HEK293T (cell line): ENCODE measurements at regions of chr6 and their contacts with region 1.

Region 1: DNA sequence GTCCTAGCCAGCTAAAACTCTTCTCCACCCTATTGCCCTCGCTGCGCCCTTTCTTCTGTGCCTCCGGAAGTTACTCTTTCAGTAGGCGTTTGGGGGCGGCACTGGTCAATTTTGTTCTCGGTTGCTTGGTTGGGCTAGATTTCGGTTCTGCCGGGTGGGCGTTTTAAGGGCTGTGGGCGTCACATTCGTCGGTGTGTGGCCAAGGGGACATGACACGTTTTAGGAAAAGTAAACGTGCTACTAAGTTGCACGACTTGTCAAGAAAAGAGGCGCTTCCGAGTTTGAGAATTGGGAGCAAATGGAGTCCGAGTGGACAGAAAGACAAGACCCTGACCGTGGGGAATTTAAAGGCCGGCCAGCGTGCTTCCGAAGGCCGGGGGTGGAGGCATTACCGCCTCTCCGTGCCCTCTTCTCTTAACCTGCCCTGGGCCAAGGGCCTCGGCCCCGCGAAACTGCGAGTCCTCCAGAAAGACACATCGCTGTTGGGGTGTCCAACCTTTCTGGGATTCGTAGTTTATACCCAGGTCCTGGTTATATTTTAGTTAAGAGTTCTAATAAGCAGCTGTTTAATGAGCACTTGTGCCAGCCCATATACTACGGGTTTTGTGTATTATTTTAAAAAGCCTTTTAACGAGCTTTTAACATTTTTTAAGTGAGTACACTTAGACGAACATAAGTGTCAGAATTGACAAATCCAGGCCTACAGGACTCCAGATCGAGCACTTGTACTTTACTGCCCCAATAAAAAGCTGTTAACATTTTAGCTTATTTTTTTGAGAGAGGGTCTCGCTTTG is 661 bp upstream of the BAG6 start:
- DNase-seq: peak; percentile 88

Region 2: DNA sequence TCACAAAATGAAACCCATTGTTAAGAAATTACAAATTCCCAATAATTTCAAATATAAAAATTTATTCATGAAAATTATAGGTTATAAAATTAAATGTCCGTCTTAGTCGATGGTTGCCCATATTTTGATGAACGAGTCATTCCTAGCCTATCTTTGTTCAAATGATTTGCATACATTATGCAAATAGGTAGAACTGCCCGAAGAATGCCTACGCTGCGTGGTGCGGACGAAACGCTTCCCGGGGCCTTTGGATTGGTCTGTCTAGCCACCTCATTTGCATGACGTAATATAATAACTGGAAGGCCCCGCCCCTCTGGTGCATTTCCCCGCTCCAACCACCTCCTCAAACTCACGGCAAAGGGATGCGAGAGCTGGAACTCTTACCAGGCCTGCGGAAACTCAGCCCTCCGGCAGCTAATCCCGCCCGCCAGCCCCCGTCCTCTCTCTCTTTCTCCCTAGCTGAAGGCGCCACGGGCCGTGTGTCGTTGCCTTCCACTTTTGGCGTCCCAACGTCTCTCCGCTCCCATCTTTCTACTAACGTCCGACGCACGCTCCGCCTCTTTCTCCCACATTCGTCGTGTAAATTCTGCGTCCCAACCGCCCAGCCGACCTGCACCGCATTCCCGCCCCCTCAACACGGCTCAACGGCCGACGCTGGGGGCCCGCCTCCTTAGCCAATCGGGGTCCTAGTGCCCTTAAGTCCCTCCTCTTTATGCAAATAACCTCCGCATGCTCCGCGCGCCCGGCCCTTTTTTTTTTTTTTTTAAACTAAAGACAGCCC is 33.1 kb before region 1 on chr6:
- CTCF ChIA-PET with region 1: no interaction called
- POLR2A ChIA-PET with region 1: interaction called, 24 read pairs
- DNase-seq: peak; percentile 98

Region 3: GRCh38 chr6:31634131-31634530 is 19.0 kb before region 1 on chr6:
- CTCF ChIA-PET with region 1: interaction called, 3 read pairs
- POLR2A ChIA-PET with region 1: interaction called, 19 read pairs
- DNase-seq: no peak

Region 4: DNA sequence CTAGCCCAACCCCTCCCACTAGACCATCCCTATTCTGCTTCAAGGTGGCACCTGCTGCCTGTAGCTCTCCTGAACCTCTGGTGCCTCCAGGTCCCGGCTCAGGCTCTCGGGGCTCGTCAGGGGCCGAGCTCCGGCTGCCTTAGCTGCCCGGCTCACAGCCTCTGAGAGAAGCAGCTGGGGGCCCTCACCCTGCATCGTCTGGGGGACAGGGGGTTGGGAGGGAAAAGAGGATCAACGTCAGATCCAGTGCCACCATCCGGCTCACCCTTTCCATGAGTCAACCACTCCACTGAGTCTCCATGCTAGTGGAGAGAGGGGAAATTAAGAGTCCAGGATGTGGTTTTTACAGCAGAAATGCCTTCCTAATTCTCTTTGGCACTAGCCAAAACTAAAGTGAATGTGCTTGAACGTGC is 13.7 kb before region 1 on chr6:
- CTCF ChIA-PET with region 1: interaction called, 3 read pairs
- POLR2A ChIA-PET with region 1: interaction called, 19 read pairs
- DNase-seq: no peak

Region 5: DNA sequence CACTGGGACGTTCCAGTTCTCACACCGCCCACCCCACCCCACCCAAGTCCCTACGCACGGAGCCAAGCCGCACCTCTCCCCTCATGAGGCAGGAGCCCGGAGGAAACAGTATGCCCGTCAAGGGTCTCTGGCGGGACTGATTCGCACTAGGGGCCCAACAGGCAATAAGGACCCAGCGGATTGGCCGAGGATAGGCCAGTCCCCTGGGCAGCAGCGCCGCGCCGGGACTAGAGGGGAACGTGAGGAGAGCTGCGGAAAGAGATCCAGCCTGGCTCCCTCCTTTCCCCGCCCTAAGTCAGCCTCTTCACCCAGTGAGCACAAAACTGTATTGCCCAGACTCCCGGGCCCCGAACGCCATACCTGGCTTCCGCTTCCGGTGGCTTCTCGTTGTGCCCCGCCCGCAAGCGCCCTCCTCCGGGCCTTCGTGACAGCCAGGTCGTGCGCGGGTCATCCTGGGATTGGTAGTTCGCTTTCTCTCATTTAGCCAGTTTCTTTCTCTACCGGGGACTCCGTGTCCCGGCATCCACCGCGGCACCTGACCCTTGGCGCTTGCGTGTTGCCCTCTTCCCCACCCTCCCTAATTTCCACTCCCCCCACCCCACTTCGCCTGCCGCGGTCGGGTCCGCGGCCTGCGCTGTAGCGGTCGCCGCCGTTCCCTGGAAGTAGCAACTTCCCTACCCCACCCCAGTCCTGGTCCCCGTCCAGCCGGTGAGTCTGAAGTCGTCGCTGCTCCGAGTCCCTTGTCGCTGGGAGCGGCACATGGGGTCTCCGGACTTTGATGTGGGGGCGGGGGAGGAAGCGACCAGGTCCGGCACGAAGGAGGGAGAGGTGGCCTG is 12.6 kb after region 1 on chr6 and contains the start of gene CSNK2B:
- CTCF ChIA-PET with region 1: interaction called, 4 read pairs
- POLR2A ChIA-PET with region 1: interaction called, 138 read pairs
- DNase-seq: peak; percentile 98

Region 6: DNA sequence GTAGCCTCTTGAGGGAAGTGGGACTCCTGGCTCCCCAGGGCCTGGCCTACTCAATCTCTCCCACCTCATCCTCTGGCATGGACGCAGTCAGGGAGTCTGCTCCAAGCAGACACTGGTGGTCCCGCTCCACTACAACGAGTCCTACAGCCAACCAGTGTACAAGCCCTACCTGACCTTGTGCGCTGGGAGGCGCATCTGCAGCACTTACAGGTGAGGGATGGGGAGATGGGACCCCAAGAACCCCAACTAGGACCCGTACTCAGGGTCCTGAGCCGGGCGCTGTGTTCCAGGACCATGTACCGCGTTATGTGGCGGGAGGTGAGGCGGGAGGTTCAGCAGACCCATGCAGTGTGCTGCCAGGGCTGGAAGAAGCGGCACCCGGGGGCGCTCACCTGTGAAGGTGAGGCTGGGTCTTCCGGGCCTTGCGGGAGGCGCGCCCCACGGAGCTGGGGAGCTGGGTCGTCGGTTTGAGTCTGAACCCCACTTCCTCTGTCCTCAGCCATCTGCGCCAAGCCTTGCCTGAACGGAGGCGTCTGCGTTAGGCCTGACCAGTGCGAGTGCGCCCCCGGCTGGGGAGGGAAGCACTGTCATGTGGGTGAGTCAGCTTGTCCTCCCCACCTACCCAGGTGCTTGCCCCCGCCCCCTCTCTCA is 513.4 kb after region 1 on chr6:
- CTCF ChIA-PET with region 1: no interaction called
- POLR2A ChIA-PET with region 1: no interaction called
- DNase-seq: no peak

Region 7: GRCh38 chr6:33433544-33434191 is 1780.5 kb after region 1 on chr6:
- CTCF ChIA-PET with region 1: no interaction called
- POLR2A ChIA-PET with region 1: no interaction called
- DNase-seq: no peak